ENCODE measurements at regions of chr5 and their contacts with region 1.

Region 1: DNA sequence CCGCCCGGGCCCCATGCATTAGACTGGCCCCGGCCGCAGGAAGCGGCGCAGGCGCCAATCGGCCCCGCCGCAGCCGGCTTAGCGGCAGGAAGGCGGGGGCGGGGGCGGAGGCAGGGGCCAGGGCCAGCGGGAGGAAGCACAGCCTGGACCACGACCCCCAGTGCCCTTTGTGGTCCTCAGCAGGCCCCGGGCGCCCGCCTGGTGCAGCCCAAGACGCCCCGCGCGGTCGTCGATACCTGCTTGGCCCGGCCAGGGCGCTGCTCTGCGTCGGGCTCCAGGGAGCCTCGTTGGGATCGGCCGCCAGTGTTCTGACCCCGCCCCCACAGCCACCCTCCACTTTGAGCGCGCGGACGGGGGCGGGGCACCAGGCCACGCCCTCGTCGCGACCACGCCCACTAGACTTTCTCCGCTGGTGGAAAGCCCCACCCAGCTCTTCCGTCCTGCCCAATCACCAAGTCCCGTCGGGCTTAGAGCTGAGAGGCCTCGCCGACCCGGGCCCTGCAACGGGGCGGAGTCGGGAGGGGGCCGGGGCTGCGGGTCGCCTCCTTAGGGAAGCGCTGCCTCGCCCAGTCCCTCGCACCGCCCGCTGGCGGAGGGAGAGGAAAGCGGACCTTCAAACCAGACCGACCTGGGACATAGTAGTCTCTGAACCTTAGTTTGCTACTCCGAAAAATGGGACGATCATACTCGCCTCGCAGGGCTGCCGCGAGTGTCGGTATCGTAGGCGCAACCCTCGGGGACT is at the start of gene PDLIM7:
- DNase-seq: peak; percentile 90 to 97
- ATAC-seq: peak; percentile 88 to 94 (median 89)
- H3K4me3 ChIP-seq: peak within 1 kb of the TSS; percentile 47
- H3K4me3 Mint-ChIP-seq: peak within 1 kb of the TSS; percentile 82
- H3K27ac ChIP-seq: no peak within 1 kb of the TSS
- H3K27ac Mint-ChIP-seq: peak within 1 kb of the TSS; percentile 47 to 56
- H3K4me1 ChIP-seq: peaks cover 72% of the 10 kb centered on the region
- H3K4me1 Mint-ChIP-seq: peaks cover 18 to 55% of the 10 kb centered on the region in 2 donors
- H3K27me3 ChIP-seq: peaks cover 5% of the 10 kb centered on the region
- H3K27me3 Mint-ChIP-seq: peaks cover 10 to 14% of the 10 kb centered on the region in 2 donors
- CTCF ChIP-seq: no peak
- total RNA-seq, gene PDLIM7: 9.7 to 58.7 (median 14.7) TPM

Region 2: GRCh38 chr5:177317959-177318377 is 179.5 kb before region 1 on chr5:
- intact Hi-C with region 1: loop called (anchors 1 kb)
- DNase-seq: peak; percentile 71 to 88
- ATAC-seq: peak; percentile 82 to 94 (median 89)
- H3K4me3 ChIP-seq: no peak overlapping the region
- H3K4me3 Mint-ChIP-seq: no peak overlapping the region
- H3K27ac ChIP-seq: no peak overlapping the region
- H3K27ac Mint-ChIP-seq: no peak overlapping the region
- H3K4me1 ChIP-seq: peaks cover 23% of the 10 kb centered on the region
- H3K4me1 Mint-ChIP-seq: peaks cover 9 to 11% of the 10 kb centered on the region in 2 donors
- H3K27me3 ChIP-seq: no peaks in the 10 kb centered on the region
- H3K27me3 Mint-ChIP-seq: no peaks in the 10 kb centered on the region
- CTCF ChIP-seq: peak; percentile 86

Region 3: GRCh38 chr5:177403792-177404640 is 93.4 kb before region 1 on chr5:
- intact Hi-C with region 1: loop called (anchors 1 kb)
- DNase-seq: peak; percentile 81 to 94
- ATAC-seq: peak; percentile 80 to 91 (median 81)
- H3K4me3 ChIP-seq: peak overlapping the region; percentile 36
- H3K4me3 Mint-ChIP-seq: peak overlapping the region; percentile 72
- H3K27ac ChIP-seq: peak overlapping the region; percentile 51
- H3K27ac Mint-ChIP-seq: peak overlapping the region; percentile 62 to 84
- H3K4me1 ChIP-seq: peaks cover 51% of the 10 kb centered on the region
- H3K4me1 Mint-ChIP-seq: peaks cover 37 to 45% of the 10 kb centered on the region in 2 donors
- H3K27me3 ChIP-seq: peaks cover 22% of the 10 kb centered on the region
- H3K27me3 Mint-ChIP-seq: peaks cover 13 to 17% of the 10 kb centered on the region in 2 donors
- CTCF ChIP-seq: peak; percentile 66

Region 4: DNA sequence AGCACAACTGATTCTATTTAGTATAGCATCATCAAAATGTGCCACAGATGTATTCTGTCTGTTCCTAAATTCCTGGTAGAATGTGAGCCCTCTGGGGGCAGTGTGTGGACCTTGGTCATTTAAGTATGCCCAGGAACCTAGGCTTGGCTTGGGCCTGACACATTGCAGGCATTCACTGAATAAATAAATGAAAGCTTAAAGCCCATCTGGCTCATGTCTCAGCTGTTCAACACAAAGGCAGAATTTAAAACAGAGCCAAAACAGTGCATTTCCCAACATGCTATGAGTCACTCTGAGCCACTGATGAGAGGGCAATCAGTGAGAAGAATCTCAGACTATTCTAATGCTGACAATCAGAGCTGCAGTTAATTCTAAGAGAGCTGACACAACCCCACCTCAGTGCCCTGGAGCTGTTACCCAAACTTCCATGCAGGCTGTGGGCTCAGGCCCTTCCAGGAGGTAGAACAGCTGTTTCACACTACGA is 48.8 kb after region 1 on chr5:
- intact Hi-C with region 1: no loop called
- DNase-seq: no peak
- ATAC-seq: no peak
- H3K4me3 ChIP-seq: no peak overlapping the region
- H3K4me3 Mint-ChIP-seq: no peak overlapping the region
- H3K27ac ChIP-seq: no peak overlapping the region
- H3K27ac Mint-ChIP-seq: no peak overlapping the region
- H3K4me1 ChIP-seq: no peaks in the 10 kb centered on the region
- H3K4me1 Mint-ChIP-seq: peaks cover 31 to 35% of the 10 kb centered on the region in 2 donors
- H3K27me3 ChIP-seq: no peaks in the 10 kb centered on the region
- H3K27me3 Mint-ChIP-seq: no peaks in the 10 kb centered on the region
- CTCF ChIP-seq: no peak

Region 5: GRCh38 chr5:178232124-178232919 is 734.9 kb after region 1 on chr5 and contains the start of gene PHYKPL:
- intact Hi-C with region 1: no loop called
- DNase-seq: peak; percentile 54 to 81
- ATAC-seq: peak; percentile 67 to 79 (median 70)
- H3K4me3 ChIP-seq: peak within 1 kb of the TSS; percentile 70
- H3K4me3 Mint-ChIP-seq: peak within 1 kb of the TSS; percentile 87
- H3K27ac ChIP-seq: peak within 1 kb of the TSS; percentile 75
- H3K27ac Mint-ChIP-seq: peak within 1 kb of the TSS; percentile 70 to 77
- H3K4me1 ChIP-seq: peaks cover 60% of the 10 kb centered on the region
- H3K4me1 Mint-ChIP-seq: peaks cover 67 to 68% of the 10 kb centered on the region in 2 donors
- H3K27me3 ChIP-seq: no peaks in the 10 kb centered on the region
- H3K27me3 Mint-ChIP-seq: no peaks in the 10 kb centered on the region
- CTCF ChIP-seq: no peak
- total RNA-seq, gene PHYKPL: 111 to 134 (median 131) TPM